ENCODE measurements at regions of chr5 and their contacts with region 1.

Region 1: DNA sequence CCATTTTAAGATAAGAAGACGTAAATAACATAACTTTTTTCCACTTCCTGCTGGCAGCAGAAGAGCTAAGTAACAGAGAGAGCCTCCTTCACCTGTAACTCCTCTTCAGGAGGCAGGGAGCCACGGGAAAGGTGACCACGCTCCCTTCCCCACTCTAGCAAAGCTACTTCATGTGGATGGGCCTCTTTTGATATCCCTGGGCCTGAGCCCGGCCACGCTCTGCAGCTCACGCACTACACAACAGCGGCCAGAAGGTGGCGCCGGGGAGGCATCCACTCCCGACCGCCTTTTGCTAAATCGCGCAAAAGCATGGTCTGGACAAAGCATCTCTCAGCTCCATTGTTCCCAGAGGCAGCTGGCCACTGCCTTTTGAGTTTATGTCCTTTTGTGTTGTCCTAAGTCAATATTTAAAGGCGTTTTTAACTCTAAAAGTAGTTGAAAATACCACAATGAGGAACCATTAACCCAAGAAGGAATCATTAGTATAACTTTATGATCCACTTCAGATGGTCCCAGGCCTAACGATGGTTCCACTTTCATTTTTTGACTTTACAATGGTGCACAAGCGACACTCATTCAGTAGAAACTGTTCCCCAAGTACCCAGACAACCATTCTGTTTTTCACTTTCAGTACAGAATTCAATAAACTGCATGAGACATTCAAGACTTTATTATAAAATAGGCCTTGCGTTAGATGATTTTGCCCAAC is 23.6 kb downstream of the CMBL start:
- DNase-seq: peak; percentile 92

Region 2: DNA sequence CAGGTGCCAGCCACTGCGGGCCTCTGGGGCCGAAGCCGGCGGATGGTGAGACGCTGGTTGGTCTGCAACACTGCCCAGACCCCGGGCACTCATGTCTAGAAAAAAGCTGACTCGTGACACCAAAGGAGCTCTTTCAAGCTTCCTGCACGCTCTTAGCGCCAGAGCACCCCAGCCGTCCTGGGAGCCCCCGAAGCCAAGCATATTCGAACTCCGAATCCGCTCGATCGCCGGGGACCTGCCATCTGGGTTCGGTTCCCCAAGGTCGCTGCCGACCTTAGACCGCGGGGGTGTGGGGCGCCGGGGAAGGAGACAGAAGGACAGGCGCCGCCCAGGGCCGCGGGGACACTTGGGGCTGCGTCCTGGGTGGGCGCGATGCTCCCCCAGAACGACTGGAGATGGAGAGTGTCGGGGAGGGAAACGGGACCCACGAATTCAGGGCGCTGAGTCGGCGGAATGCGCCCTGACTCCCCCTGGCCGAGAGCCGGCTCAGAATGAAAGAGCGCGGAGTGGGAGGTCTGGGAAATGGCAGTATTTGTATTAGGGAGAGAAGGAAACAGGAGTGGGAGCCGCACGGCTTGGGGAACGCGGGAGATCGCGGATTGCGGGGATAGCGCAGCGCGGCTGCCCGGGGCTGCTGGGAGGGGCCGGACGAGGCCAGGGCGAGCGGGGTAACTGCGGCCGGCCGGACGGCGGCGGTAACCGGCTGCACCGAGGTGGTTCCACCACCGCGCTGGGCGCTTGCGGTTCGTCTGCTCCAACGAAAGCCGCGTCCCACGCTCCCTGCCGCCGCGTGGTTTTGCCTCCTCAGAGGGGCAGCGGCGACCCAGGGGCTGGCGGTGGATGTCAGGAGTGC is 49.3 kb after region 1 on chr5:
- intact Hi-C with region 1: loop called (anchors 5 kb)
- DNase-seq: peak; percentile 81

Region 3: GRCh38 chr5:10353241-10354047 is 69.4 kb after region 1 on chr5 and contains the start of gene MARCHF6:
- intact Hi-C with region 1: loop called (anchors 5 kb)
- DNase-seq: peak; percentile 97
- total RNA-seq, gene MARCHF6: 142 TPM

Region 4: DNA sequence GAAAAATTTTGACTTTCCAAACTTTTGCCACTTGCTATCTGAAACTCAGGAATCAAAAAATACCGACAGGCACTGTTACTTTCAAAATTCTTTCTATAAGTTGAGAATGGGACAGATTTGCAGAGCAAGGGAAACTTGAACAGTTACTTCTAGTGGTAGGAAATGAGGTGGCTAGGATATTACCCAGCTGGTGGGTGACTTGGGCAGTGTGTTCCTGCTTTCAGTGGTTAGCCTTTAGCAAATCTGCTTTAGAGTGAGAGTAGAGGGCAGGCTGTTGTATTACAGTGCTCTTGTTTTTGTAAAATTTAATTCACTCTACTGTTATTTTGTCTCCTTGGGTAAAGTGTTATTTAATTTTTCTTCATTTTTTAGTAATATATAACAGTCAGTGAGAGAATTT is 117.4 kb after region 1 on chr5:
- intact Hi-C with region 1: loop called (anchors 5 kb)
- DNase-seq: no peak

Region 5: GRCh38 chr5:10424124-10424731 is 140.1 kb after region 1 on chr5:
- intact Hi-C with region 1: loop called (anchors 2 kb)
- DNase-seq: no peak

Region 6: DNA sequence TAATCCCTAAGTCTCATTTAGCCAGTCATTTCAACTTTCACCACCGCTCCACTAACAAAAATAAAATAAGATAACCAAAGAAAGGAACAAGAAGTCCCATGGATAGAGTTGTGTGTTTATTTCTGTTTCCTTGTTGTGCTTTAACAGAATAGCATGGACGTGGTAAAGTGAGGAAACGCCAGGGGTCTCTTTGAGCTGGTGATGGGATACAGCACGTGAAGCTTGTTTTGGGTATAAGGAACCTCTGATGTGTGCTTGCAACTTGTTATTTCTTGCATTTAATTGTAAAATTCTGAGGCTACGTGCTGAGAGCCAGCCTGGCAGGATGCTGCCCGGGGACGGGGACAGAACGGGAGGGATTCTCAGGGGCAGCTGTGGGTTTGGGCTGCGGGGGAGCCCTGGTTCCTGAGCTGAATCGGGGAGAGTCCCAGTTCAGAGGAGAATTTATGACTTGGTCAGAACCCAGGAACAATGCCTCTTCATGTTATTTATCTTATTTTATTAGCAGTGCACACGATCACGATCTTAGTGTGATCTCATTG is 343.1 kb after region 1 on chr5:
- intact Hi-C with region 1: loop called (anchors 5 kb)
- DNase-seq: no peak

Region 7: DNA sequence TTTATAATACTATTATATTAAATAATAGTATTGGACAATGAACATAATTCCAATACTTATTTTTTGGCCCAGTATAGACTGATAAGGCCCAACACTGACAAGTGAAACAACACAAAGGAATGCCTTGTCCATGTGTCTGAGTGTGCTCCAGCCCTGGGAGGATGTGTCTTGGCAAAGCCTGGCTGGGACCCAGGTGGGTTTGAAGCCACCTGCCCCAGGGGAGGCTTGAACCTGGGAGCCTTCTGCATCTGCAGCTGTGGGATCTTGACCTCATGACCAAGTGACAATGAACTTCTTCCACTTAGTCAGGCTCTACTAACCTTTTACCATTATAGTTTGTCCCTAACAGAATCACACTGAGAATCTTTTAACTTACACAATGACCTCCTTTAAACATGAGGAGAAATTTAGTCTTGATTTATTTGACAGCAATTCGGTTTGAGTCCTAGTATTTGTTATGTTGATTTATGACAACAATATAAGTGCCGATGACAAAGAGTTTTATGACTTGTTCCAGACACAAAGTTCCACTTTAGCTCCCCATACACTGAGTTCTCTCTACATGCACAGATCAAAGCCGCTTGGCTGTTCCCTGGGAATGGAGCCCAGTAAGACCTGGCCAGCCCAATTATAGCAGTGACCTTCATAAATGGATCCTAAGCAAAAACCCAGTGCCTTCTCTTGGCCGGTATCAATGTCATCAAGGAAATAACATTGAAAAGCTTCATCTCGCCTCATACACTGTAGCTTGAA is 1325.7 kb after region 1 on chr5:
- intact Hi-C with region 1: no loop called
- DNase-seq: no peak

Measured in cardiac septum (tissue), 1 donor.